SK-N-SH (cell line): ENCODE measurements at regions of chr2 and their contacts with region 1.

Region 1: GRCh38 chr2:235605312-235606003 is 111.6 kb downstream of the AGAP1 start:
- DNase-seq: peak; percentile 89
- H3K4me3 ChIP-seq: peak overlapping the region in 1 of 2 experiments; percentile 32; a peak in 2 of 4 replicates
- H3K27ac ChIP-seq: peak overlapping the region; percentile 49 to 89; a peak in 3 of 4 replicates
- H3K4me1 ChIP-seq: peaks cover 0 to 21% of the 10 kb centered on the region in 2 experiments; a peak in 2 of 4 replicates
- H3K27me3 ChIP-seq: no peaks in the 10 kb centered on the region
- CTCF ChIP-seq: no peak
- EP300 ChIP-seq: peak in 1 of 2 experiments; percentile 39; a peak in 1 of 4 replicates
- RAD21 ChIP-seq: no peak; the same call in 1 of the 2 replicates

Region 2: GRCh38 chr2:235669269-235669831 is 63.9 kb after region 1 on chr2:
- CTCF ChIA-PET with region 1: interaction called, 15 read pairs
- POLR2A ChIA-PET with region 1: no interaction called
- DNase-seq: peak; percentile 90
- H3K4me3 ChIP-seq: peak overlapping the region in 1 of 2 experiments; percentile 61; a peak in 3 of 4 replicates
- H3K27ac ChIP-seq: peak overlapping the region in 1 of 2 experiments; percentile 47; a peak in 1 of 4 replicates
- H3K4me1 ChIP-seq: peaks cover 6 to 36% of the 10 kb centered on the region in 2 experiments; a peak in 3 of 4 replicates
- H3K27me3 ChIP-seq: no peaks in the 10 kb centered on the region
- CTCF ChIP-seq: no peak
- EP300 ChIP-seq: no peak
- RAD21 ChIP-seq: no peak